Activated T-helper 2 cell treated with anti-CD3 and anti-CD28 coated beads, Interferon-gamma antibody, Interleukin-2, Interleukin-4, amounts not matched to agents 10 μg/mL and 5 μg/mL and 100 μg/mL, durations not matched to agents 14 hours and 24 hours and 36 hours (primary cell): ENCODE measurements at regions of chr13 and their contacts with region 1.

Region 1: GRCh38 chr13:26557393-26558023 is at the start of gene WASF3:
- DNase-seq: peak; percentile 62
- H3K4me3 Mint-ChIP-seq: peak within 1 kb of the TSS; percentile 65
- H3K27ac Mint-ChIP-seq: no peak within 1 kb of the TSS
- H3K4me1 Mint-ChIP-seq: peaks cover 7% of the 10 kb centered on the region
- H3K27me3 Mint-ChIP-seq: peaks cover 40% of the 10 kb centered on the region
- total RNA-seq, gene WASF3: 0.25 and 0.57 TPM in 2 replicates

Region 2: DNA sequence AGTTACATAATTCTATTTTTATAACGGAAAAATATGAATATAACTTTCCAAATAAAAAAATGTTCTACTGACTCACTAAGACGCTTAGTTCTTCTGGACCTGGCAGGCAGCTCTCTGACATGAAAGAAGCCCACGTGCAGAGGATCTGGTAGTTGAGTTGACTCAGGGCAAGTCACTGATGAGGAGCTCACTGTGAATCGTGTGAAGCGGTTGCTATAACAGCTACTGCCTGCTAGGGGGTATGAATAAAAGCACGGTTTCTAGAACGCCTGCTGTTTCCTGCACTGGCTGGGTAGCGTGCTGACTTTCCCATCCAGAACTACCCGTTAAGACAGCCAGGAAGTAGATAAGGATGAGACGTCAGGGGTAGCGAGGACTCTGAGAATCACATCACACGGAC is 54.7 kb before region 1 on chr13:
- intact Hi-C with region 1: loop called (anchors 5 kb)
- DNase-seq: peak; percentile 22
- H3K4me3 Mint-ChIP-seq: no peak overlapping the region
- H3K27ac Mint-ChIP-seq: no peak overlapping the region
- H3K4me1 Mint-ChIP-seq: peaks cover 15% of the 10 kb centered on the region
- H3K27me3 Mint-ChIP-seq: no peaks in the 10 kb centered on the region

Region 3: DNA sequence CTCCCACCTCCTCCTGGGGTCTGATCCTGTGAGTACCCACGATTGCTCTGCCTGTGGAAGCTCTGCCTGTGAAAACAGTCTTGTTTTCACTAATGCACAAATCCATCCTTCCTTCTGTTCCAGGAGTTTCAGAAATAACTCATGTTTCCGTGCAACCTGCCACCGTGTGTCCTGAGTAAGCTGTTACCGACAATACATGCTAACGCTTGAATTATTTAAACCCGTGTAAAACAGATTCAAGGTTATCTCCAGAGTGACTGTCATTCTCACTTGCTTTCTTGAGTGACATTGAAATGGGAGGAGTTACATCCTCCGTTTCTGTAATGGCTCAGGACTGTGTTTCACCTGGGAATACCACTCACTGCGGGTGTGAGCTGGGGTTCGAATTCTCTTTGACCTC is 178.2 kb after region 1 on chr13:
- intact Hi-C with region 1: no loop called
- DNase-seq: no peak
- H3K4me3 Mint-ChIP-seq: no peak overlapping the region
- H3K27ac Mint-ChIP-seq: no peak overlapping the region
- H3K4me1 Mint-ChIP-seq: no peaks in the 10 kb centered on the region
- H3K27me3 Mint-ChIP-seq: no peaks in the 10 kb centered on the region